ENCODE measurements at regions of chr21 and their contacts with region 1.

Region 1: GRCh38 chr21:41283211-41283818 is 33.3 kb upstream of the FAM3B start:
- DNase-seq: peak; percentile 63
- H3K4me3 Mint-ChIP-seq: no peak overlapping the region
- H3K27ac Mint-ChIP-seq: no peak overlapping the region
- H3K4me1 Mint-ChIP-seq: no peaks in the 10 kb centered on the region
- H3K27me3 Mint-ChIP-seq: peaks cover 41% of the 10 kb centered on the region

Region 2: DNA sequence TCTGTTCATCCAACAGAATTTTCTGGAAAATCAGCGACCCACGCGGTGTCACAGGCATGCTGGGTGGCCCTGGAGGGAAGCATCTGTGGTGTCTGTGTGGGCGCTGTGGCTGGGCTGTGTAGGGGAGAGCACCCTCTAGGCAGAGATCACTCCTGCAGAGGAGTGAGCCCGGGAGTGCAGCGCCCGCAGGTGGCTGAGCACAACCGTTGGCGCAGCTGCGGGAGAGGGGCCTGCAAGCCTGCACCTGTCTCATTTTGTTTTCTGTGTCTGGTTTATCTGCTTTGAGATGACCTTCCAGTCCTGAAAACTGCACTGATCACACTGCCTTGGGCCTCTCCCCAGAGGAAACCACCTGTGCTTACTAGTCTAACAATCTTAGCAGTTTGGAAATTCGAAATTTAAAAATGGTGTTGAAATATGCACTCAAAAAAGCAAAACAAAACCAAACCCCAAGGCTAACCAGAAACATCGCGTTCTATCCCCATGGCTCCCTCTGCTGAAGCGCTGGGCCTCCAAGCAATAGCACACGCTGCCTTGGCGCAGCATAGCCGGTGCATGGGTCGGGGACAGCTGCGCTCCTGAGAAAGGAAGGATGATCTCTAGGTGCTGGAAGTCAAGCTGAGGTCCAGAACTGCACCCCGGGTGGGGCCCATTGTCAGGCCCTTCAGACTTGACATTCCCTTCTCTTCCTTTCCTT is 38.0 kb after region 1 on chr21:
- CTCF ChIA-PET with region 1: interaction called, 17 read pairs
- DNase-seq: no peak
- H3K4me3 Mint-ChIP-seq: no peak overlapping the region
- H3K27ac Mint-ChIP-seq: no peak overlapping the region
- H3K4me1 Mint-ChIP-seq: peaks cover 8% of the 10 kb centered on the region
- H3K27me3 Mint-ChIP-seq: peaks cover 64% of the 10 kb centered on the region

Region 3: DNA sequence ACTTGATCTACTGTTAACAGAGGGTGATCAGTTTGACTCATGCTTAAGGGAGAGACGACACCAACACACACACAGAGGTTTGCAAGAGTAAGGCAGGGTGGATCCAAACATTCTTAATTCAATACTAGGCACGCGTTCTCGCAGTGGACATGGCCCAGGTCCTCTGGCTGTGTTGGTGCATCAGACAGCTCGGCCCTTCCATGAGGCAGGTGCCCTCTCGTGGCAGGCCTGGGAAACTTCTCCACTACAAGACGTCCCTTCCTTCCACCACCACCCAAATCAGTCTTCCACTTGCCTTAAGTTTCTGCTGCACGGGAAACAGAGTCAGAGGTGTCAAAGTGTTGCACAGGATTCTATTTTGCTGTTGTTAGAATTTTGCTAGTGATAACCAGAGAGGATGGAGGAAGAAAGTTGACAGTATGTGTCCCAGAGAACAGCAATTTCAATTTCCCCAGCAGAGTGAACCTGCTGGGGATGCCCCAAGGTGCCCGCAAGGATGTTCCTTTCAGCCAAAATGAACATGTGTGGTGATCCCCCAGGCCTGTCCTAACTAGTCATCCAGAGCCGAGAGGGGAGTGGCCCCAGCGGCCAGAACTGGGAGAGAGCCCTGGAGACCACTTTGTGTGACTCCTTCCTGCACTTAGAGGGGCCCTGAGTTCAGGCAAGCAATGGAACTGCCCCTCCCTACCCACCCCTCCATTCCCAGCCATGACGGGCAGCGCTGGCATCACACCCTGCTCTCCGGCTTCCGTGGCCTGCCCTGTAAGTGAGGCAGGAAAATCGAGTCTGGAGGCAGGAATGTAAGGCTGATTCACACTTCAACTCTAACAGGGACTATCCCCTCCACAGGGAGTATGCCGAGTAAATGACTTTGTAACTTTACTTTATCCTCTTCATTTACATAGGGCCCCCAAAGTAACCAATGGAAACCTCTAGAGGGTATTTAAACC is 177.5 kb after region 1 on chr21:
- CTCF ChIA-PET with region 1: interaction called, 12 read pairs
- DNase-seq: peak; percentile 73
- H3K4me3 Mint-ChIP-seq: no peak overlapping the region
- H3K27ac Mint-ChIP-seq: no peak overlapping the region
- H3K4me1 Mint-ChIP-seq: peaks cover 3% of the 10 kb centered on the region
- H3K27me3 Mint-ChIP-seq: no peaks in the 10 kb centered on the region

Region 4: GRCh38 chr21:41612674-41613532 is 329.6 kb after region 1 on chr21:
- CTCF ChIA-PET with region 1: interaction called, 18 read pairs
- DNase-seq: peak; percentile 44
- H3K4me3 Mint-ChIP-seq: no peak overlapping the region
- H3K27ac Mint-ChIP-seq: no peak overlapping the region
- H3K4me1 Mint-ChIP-seq: no peaks in the 10 kb centered on the region
- H3K27me3 Mint-ChIP-seq: peaks cover 48% of the 10 kb centered on the region

Region 5: GRCh38 chr21:42107881-42108553 is 824.7 kb after region 1 on chr21:
- CTCF ChIA-PET with region 1: interaction called, 10 read pairs
- DNase-seq: peak; percentile 78
- H3K4me3 Mint-ChIP-seq: peak overlapping the region; percentile 33
- H3K27ac Mint-ChIP-seq: peak overlapping the region; percentile 80
- H3K4me1 Mint-ChIP-seq: peaks cover 14% of the 10 kb centered on the region
- H3K27me3 Mint-ChIP-seq: peaks cover 38% of the 10 kb centered on the region